IMR-90 (cell line): ENCODE measurements at regions of chrX and their contacts with region 1.

Region 1: DNA sequence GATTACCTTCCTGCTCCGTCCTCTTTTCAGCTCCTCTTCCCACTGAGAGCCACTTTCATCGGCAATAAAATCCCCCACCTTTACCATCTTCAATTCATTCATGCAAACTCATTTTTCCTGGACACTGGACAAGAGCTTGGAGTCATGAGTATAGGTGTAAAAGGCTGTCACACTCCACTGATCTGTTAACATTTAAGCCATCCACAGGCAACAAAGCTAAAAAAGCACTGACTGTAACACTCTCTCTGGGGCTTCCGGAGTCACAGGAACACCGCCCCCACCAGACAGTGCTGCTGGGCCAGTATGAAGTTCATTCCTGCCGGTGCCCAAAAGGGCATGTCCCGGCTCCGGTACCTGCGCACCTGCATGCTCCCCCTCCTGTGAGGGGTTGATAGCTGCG is 38.5 kb downstream of the MAGEB5 start:
- DNase-seq: no peak
- ATAC-seq: no peak
- H3K4me3 ChIP-seq: no peak overlapping the region
- H3K27ac ChIP-seq: no peak overlapping the region
- H3K4me1 ChIP-seq: no peaks in the 10 kb centered on the region
- H3K27me3 ChIP-seq: no peaks in the 10 kb centered on the region
- CTCF ChIP-seq: no peak
- POLR2A ChIP-seq: no peak
- RAD21 ChIP-seq: no peak

Region 2: DNA sequence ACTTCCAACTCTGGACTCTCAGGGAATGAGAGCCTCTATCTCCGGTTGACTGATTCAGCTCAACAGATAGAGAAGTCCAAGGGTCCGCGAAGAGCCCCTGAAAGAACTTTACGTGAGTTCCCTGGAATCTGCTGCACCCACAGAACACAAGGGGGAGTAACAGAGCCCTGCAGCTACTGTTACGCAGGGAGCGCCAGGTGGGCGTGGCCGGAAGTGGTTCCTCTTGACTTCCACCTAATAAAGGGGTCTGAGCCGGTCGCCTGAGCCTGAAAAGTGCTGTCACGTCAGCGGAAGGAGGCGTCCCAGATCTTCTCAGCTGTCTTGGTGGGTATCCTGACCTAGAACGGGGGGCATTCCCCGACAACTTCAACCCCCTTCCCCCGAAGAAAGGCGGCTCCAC is 62.2 kb before region 1 on chrX and contains the start of gene MAGEB6:
- CTCF ChIA-PET with region 1: no interaction called
- POLR2A ChIA-PET with region 1: no interaction called
- dilution Hi-C with region 1: no loop called
- in situ Hi-C with region 1: no loop called
- intact Hi-C with region 1: loop called (anchors 10 kb)
- DNase-seq: no peak
- ATAC-seq: no peak
- H3K4me3 ChIP-seq: no peak within 1 kb of the TSS
- H3K27ac ChIP-seq: no peak within 1 kb of the TSS
- H3K4me1 ChIP-seq: no peaks in the 10 kb centered on the region
- H3K27me3 ChIP-seq: no peaks in the 10 kb centered on the region
- CTCF ChIP-seq: no peak
- POLR2A ChIP-seq: no peak
- RAD21 ChIP-seq: no peak
- total RNA-seq, gene MAGEB6: not detected in 2 replicates